T-cell (primary cell): ENCODE measurements at regions of chr1 and their contacts with region 1.

Region 1: GRCh38 chr1:175023043-175023921 is at the start of gene MRPS14:
- DNase-seq: peak; percentile 94 to 99 (median 97)
- ATAC-seq: peak; percentile 91 to 96 (median 94)
- H3K4me3 ChIP-seq: peak within 1 kb of the TSS; percentile 89 to 100
- H3K4me3 Mint-ChIP-seq: peak within 1 kb of the TSS; percentile 90 to 96 (median 90)
- H3K27ac ChIP-seq: peak within 1 kb of the TSS; percentile 90
- H3K27ac Mint-ChIP-seq: peak within 1 kb of the TSS; percentile 81 to 94
- H3K4me1 ChIP-seq: peaks cover 8 to 14% of the 10 kb centered on the region in 2 experiments
- H3K4me1 Mint-ChIP-seq: peaks cover 35 to 39% (median 36%) of the 10 kb centered on the region in 3 donors
- H3K27me3 ChIP-seq: no peaks in the 10 kb centered on the region
- H3K27me3 Mint-ChIP-seq: no peaks in the 10 kb centered on the region
- total RNA-seq, gene MRPS14: 14.3 to 28.8 (median 25.8) TPM

Region 2: GRCh38 chr1:174800216-174800851 is 222.9 kb before region 1 on chr1:
- CTCF ChIA-PET with region 1: interaction called in 1 of 2 experiments, 10 read pairs
- POLR2A ChIA-PET with region 1: interaction called in 1 of 2 experiments, 7 read pairs
- DNase-seq: peak in 17 of 35 experiments; percentile 1 to 43 (median 14)
- ATAC-seq: peak; percentile 6 to 14 (median 10)
- H3K4me3 ChIP-seq: peak overlapping the region; percentile 57 to 64
- H3K4me3 Mint-ChIP-seq: no peak overlapping the region
- H3K27ac ChIP-seq: peak overlapping the region; percentile 58
- H3K27ac Mint-ChIP-seq: no peak overlapping the region
- H3K4me1 ChIP-seq: peaks cover 3 to 11% of the 10 kb centered on the region in 2 experiments
- H3K4me1 Mint-ChIP-seq: peaks cover 0 to 16% (median 5%) of the 10 kb centered on the region in 3 donors
- H3K27me3 ChIP-seq: no peaks in the 10 kb centered on the region
- H3K27me3 Mint-ChIP-seq: no peaks in the 10 kb centered on the region

Region 3: DNA sequence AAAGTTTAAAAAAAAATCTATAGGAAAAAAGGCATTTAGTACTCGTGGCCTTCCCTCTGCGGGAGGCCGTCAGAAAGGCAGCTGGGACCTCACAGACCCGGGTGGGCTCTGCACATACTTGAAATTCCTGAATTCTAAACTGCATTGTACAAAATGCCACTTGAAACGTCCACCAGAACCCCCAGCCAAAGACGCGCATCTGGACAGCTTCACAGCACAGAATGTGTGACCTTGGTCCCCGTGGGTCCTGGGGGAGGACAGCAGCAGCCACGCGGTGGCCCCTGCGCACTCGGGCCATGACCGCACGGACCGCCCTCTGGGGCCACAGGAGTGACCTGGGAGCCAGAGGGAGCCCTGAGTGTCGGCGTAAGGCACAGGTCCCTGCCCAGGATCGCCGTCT is 20.5 kb after region 1 on chr1:
- CTCF ChIA-PET with region 1: no interaction called
- POLR2A ChIA-PET with region 1: no interaction called
- DNase-seq: no peak
- ATAC-seq: no peak
- H3K4me3 ChIP-seq: no peak overlapping the region
- H3K4me3 Mint-ChIP-seq: no peak overlapping the region
- H3K27ac ChIP-seq: no peak overlapping the region
- H3K27ac Mint-ChIP-seq: no peak overlapping the region
- H3K4me1 ChIP-seq: no peaks in the 10 kb centered on the region
- H3K4me1 Mint-ChIP-seq: no peaks in the 10 kb centered on the region
- H3K27me3 ChIP-seq: peaks cover 0 to 11% of the 10 kb centered on the region in 2 experiments
- H3K27me3 Mint-ChIP-seq: peaks cover 17 to 30% of the 10 kb centered on the region in 2 donors

Region 4: GRCh38 chr1:175124861-175125260 is 101.6 kb after region 1 on chr1:
- CTCF ChIA-PET with region 1: interaction called, 4 to 54 read pairs
- POLR2A ChIA-PET with region 1: no interaction called
- DNase-seq: no peak
- ATAC-seq: no peak
- H3K4me3 ChIP-seq: no peak overlapping the region
- H3K4me3 Mint-ChIP-seq: no peak overlapping the region
- H3K27ac ChIP-seq: no peak overlapping the region
- H3K27ac Mint-ChIP-seq: no peak overlapping the region
- H3K4me1 ChIP-seq: no peaks in the 10 kb centered on the region
- H3K4me1 Mint-ChIP-seq: no peaks in the 10 kb centered on the region
- H3K27me3 ChIP-seq: peaks cover 0 to 2% of the 10 kb centered on the region in 2 experiments
- H3K27me3 Mint-ChIP-seq: peaks cover 0 to 2% of the 10 kb centered on the region in 2 donors